Psoas muscle (tissue), 8 donors: ENCODE measurements at regions of chr4 and their contacts with region 1.

Region 1: GRCh38 chr4:108650212-108651013 is at the start of gene OSTC:
- DNase-seq: peak; percentile 95 to 97
- ATAC-seq: peak; percentile 98 to 99 (median 98)
- H3K4me3 ChIP-seq: peak within 1 kb of the TSS; percentile 99
- H3K27ac ChIP-seq: peak within 1 kb of the TSS; percentile 93
- H3K4me1 ChIP-seq: peaks cover 12% of the 10 kb centered on the region
- H3K27me3 ChIP-seq: no peaks in the 10 kb centered on the region
- CTCF ChIP-seq: no peak
- total RNA-seq, gene OSTC: 17.6 to 29.8 (median 21.2) TPM

Region 2: GRCh38 chr4:108540536-108540935 is 109.9 kb before region 1 on chr4:
- intact Hi-C with region 1: no loop called
- DNase-seq: no peak
- ATAC-seq: no peak
- H3K4me3 ChIP-seq: no peak overlapping the region
- H3K27ac ChIP-seq: no peak overlapping the region
- H3K4me1 ChIP-seq: no peaks in the 10 kb centered on the region
- H3K27me3 ChIP-seq: peaks cover 0 to 2% (median 0%) of the 10 kb centered on the region in 3 donors
- CTCF ChIP-seq: no peak

Region 3: DNA sequence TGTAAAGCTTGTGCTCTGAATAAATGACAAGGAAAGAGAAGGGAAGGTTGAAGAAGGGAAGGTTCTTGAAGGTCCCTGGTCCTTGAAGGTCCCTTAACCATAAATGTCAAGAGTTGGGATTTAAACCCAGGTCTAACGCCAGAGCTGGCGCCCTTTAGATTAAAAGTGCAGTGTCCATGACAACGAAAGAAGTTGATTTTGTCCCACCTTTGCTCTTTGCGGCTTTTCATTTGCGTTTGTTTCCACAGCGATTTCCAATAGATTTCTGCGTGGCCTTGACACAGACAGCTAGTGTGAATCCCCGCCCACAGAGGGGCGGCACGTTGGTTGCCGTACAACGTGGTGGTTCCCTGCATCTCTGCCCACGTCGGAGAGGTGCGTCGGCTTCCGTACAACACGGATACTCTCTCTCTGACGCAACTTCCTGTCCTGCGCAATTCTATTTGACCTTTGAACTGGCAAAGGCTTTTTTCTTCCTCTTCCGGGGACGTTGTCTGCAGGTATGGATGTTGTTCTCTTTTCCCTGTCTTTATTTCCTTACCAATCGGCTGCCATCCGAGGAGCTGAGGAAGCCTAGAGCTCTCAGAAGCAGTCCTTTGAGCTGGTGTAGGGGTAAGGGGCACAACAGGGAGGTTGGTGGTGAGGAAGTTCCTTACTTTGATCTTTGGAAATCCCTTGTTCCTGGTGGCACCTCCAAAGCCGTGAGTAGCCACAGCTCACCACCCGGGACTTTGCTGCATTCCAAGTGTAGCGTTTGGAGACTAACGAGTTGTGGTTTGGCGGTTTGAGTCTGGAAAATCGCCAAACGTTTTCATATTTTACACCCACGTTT is 30.1 kb before region 1 on chr4 and contains the start of gene RPL34:
- intact Hi-C with region 1: loop called in 1 of 2 experiments (anchors 1 kb)
- DNase-seq: peak; percentile 96 to 98
- ATAC-seq: peak; percentile 99 to 100 (median 100)
- H3K4me3 ChIP-seq: peak within 1 kb of the TSS; percentile 85
- H3K27ac ChIP-seq: peak within 1 kb of the TSS; percentile 89
- H3K4me1 ChIP-seq: peaks cover 17% of the 10 kb centered on the region
- H3K27me3 ChIP-seq: no peaks in the 10 kb centered on the region
- CTCF ChIP-seq: no peak
- total RNA-seq, gene RPL34: 614 to 727 (median 691) TPM